ENCODE measurements at regions of chr12 and their contacts with region 1.

Region 1: DNA sequence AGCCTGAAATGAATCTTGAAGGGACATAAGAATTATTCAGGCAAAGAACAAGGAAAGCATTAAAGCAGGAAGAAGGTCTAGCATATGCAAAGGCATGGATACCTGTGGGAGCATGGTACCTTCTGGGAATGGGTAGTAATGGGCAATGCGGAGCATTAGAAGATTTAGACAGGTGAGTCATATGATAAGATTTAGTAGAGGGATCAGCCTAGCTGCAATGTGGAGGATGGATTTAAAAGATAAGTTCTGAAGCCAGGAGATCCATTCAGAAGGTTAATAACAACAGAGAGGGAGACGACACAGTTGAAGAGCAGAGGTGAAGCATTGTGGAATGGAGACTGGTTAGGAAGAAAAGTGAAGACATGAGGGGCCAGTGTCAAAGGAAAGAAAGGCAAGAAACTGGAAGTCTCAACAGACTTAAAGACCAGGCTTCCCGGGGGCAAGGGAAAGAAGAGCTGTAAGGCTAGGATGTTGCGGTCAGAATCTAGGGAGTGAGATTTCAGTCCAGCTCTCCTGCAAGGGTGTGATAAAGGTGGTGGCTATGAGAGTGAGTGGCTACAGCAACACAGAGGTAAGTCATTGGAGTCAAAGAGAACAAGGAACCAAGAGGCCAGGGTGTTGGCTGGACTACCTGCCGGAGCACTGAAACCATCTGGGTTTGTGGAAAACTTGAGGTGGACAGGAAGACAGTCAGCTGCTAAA is 5.6 kb upstream of the STAT6 start:
- DNase-seq: no peak
- ATAC-seq: no peak
- H3K4me3 ChIP-seq: no peak overlapping the region
- H3K4me3 Mint-ChIP-seq: no peak overlapping the region
- H3K27ac ChIP-seq: no peak overlapping the region
- H3K27ac Mint-ChIP-seq: no peak overlapping the region
- H3K4me1 ChIP-seq: peaks cover 7% of the 10 kb centered on the region
- H3K4me1 Mint-ChIP-seq: peaks cover 12% of the 10 kb centered on the region
- H3K27me3 ChIP-seq: no peaks in the 10 kb centered on the region
- H3K27me3 Mint-ChIP-seq: no peaks in the 10 kb centered on the region
- CTCF ChIP-seq: no peak

Region 2: GRCh38 chr12:56266693-56267442 is 849.9 kb before region 1 on chr12 and contains the start of gene COQ10A:
- CTCF ChIA-PET with region 1: no interaction called
- POLR2A ChIA-PET with region 1: no interaction called
- intact Hi-C with region 1: no loop called
- DNase-seq: peak; percentile 77 to 95 (median 92)
- ATAC-seq: peak; percentile 87
- H3K4me3 ChIP-seq: peak within 1 kb of the TSS; percentile 87 to 89
- H3K4me3 Mint-ChIP-seq: peak within 1 kb of the TSS; percentile 92
- H3K27ac ChIP-seq: peak within 1 kb of the TSS; percentile 95 to 98
- H3K27ac Mint-ChIP-seq: peak within 1 kb of the TSS; percentile 92
- H3K4me1 ChIP-seq: peaks cover 12% of the 10 kb centered on the region
- H3K4me1 Mint-ChIP-seq: peaks cover 20% of the 10 kb centered on the region
- H3K27me3 ChIP-seq: no peaks in the 10 kb centered on the region
- H3K27me3 Mint-ChIP-seq: no peaks in the 10 kb centered on the region
- CTCF ChIP-seq: peak; percentile 66
- total RNA-seq, gene COQ10A: 29.5 to 38.8 TPM

Region 3: GRCh38 chr12:57158665-57159064 is 41.9 kb after region 1 on chr12:
- CTCF ChIA-PET with region 1: no interaction called
- POLR2A ChIA-PET with region 1: no interaction called
- intact Hi-C with region 1: no loop called
- DNase-seq: no peak
- ATAC-seq: no peak
- H3K4me3 ChIP-seq: no peak overlapping the region
- H3K4me3 Mint-ChIP-seq: no peak overlapping the region
- H3K27ac ChIP-seq: no peak overlapping the region
- H3K27ac Mint-ChIP-seq: no peak overlapping the region
- H3K4me1 ChIP-seq: peaks cover 6% of the 10 kb centered on the region
- H3K4me1 Mint-ChIP-seq: peaks cover 6% of the 10 kb centered on the region
- H3K27me3 ChIP-seq: no peaks in the 10 kb centered on the region
- H3K27me3 Mint-ChIP-seq: peaks cover 2% of the 10 kb centered on the region
- CTCF ChIP-seq: no peak

Region 4: DNA sequence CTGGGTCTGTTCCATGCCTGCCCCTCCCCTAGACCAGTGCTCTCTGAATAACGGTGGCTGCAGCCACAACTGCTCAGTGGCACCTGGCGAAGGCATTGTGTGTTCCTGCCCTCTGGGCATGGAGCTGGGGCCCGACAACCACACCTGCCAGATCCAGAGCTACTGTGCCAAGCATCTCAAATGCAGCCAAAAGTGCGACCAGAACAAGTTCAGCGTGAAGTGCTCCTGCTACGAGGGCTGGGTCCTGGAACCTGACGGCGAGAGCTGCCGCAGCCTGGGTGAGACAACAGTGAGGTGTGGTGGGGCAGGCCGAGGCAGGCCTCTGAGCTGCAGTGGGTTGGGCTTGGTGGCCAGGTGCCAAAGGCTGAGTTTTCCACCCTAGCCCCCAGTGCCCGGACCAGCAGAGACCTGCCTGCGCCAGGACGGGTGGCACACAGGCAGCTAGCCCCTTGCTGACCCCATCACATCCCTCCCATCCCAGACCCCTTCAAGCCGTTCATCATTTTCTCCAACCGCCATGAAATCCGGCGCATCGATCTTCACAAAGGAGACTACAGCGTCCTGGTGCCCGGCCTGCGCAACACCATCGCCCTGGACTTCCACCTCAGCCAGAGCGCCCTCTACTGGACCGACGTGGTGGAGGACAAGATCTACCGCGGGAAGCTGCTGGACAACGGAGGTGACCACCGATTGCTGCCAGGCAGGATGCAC is 58.9 kb after region 1 on chr12:
- CTCF ChIA-PET with region 1: interaction called, 224 read pairs
- POLR2A ChIA-PET with region 1: no interaction called
- intact Hi-C with region 1: no loop called
- DNase-seq: peak in 8 of 9 experiments; percentile 5 to 52 (median 40)
- ATAC-seq: no peak
- H3K4me3 ChIP-seq: no peak overlapping the region
- H3K4me3 Mint-ChIP-seq: no peak overlapping the region
- H3K27ac ChIP-seq: no peak overlapping the region
- H3K27ac Mint-ChIP-seq: no peak overlapping the region
- H3K4me1 ChIP-seq: no peaks in the 10 kb centered on the region
- H3K4me1 Mint-ChIP-seq: no peaks in the 10 kb centered on the region
- H3K27me3 ChIP-seq: no peaks in the 10 kb centered on the region
- H3K27me3 Mint-ChIP-seq: no peaks in the 10 kb centered on the region
- CTCF ChIP-seq: peak; percentile 15